Stomach (tissue), 19 donors: ENCODE measurements at regions of chr15 and their contacts with region 1.

Region 1: DNA sequence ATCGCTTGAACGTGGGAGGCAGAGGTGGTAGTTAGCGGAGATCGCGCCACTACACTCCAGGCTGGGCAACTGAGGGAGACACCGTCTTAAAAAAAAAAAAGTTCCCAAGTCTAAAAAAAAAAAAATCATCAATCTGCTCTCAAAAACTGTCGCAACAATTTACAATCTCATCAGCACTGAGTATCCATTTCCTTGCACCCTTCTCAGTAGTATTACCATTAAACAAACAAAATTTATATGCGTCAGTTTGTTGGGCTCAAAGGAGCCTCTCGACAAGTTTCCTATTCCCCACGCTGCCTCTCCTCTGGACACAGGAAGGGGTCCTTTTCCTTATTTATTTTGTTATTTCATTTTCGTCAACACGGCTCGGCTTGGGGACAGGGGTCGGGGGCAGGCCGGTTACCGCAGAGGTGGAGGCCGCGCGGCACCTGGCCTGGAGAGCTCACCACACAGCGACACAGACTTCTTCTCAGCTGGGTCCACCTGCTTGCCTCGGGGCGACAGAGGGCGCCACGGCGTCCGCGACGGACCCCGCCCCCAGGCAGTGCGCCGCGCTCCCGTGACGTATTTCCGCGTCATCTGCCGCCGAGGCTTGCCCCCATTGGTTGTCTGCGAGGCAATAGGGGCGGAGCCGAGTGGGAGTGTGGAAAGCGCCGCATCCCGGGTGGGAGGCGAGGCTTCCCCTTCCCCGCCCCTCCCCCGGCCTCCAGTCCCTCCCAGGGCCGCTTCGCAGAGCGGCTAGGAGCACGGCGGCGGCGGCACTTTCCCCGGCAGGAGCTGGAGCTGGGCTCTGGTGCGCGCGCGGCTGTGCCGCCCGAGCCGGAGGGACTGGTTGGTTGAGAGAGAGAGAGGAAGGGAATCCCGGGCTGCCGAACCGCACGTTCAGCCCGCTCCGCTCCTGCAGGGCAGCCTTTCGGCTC is at the start of gene MAP2K1:
- DNase-seq: peak; percentile 99
- H3K4me3 ChIP-seq: peak within 1 kb of the TSS; percentile 72 to 95 (median 77)
- H3K27ac ChIP-seq: peak within 1 kb of the TSS; percentile 92 to 97 (median 96)
- H3K4me1 ChIP-seq: peaks cover 31 to 49% (median 40%) of the 10 kb centered on the region in 4 donors
- H3K27me3 ChIP-seq: no peaks in the 10 kb centered on the region
- CTCF ChIP-seq: peak in 4 of 7 experiments; percentile 49 to 75 (median 56)
- EP300 ChIP-seq: no peak
- POLR2A ChIP-seq: peak in 1 of 4 donors; percentile 64
- total RNA-seq, gene MAP2K1: 21.9 to 123 (median 35.0) TPM

Region 2: DNA sequence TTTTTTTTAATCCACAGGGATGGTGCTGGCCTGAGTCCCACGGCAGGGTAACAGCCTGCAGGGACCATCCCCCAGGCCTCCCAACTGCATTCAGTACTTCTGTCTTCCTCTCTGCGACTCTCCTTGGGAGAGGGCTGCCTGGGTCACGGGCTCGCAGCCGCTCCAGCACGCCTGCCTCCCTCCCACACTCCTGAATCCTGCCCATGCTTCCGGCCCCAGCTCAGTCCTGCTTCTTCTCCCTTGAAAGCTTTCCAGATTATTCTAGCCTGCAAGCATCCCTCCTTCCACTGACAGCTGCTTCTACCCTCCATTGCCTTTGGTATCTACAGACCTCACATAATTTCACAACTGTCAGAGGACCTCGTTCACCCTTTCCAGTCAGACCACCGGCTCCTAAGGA is 165.3 kb before region 1 on chr15:
- intact Hi-C with region 1: no loop called
- DNase-seq: peak in 1 of 2 donors; percentile 38
- H3K4me3 ChIP-seq: no peak overlapping the region
- H3K27ac ChIP-seq: no peak overlapping the region
- H3K4me1 ChIP-seq: no peaks in the 10 kb centered on the region
- H3K27me3 ChIP-seq: no peaks in the 10 kb centered on the region
- CTCF ChIP-seq: no peak
- EP300 ChIP-seq: no peak
- POLR2A ChIP-seq: no peak

Region 3: GRCh38 chr15:66497502-66498455 is 111.3 kb after region 1 on chr15 and contains the start of gene SNAPC5:
- intact Hi-C with region 1: loop called (anchors 5 kb)
- DNase-seq: peak; percentile 99
- H3K4me3 ChIP-seq: peak within 1 kb of the TSS; percentile 71 to 92 (median 86)
- H3K27ac ChIP-seq: peak within 1 kb of the TSS; percentile 87 to 92 (median 90)
- H3K4me1 ChIP-seq: peaks cover 14 to 85% (median 40%) of the 10 kb centered on the region in 4 donors
- H3K27me3 ChIP-seq: no peaks in the 10 kb centered on the region
- CTCF ChIP-seq: peak in 6 of 7 experiments; percentile 62 to 99 (median 97)
- EP300 ChIP-seq: no peak
- POLR2A ChIP-seq: peak in 2 of 4 donors; percentile 6 to 25
- total RNA-seq, gene SNAPC5: 2.3 to 18.2 (median 9.8) TPM